Activated naive CD4-positive, alpha-beta T cell treated with anti-CD3 and anti-CD28 coated beads, Interleukin-2, amount 10 ng/mL, durations not matched to agents 7 days and 5 days (primary cell): ENCODE measurements at regions of chr16 and their contacts with region 1.

Region 1: DNA sequence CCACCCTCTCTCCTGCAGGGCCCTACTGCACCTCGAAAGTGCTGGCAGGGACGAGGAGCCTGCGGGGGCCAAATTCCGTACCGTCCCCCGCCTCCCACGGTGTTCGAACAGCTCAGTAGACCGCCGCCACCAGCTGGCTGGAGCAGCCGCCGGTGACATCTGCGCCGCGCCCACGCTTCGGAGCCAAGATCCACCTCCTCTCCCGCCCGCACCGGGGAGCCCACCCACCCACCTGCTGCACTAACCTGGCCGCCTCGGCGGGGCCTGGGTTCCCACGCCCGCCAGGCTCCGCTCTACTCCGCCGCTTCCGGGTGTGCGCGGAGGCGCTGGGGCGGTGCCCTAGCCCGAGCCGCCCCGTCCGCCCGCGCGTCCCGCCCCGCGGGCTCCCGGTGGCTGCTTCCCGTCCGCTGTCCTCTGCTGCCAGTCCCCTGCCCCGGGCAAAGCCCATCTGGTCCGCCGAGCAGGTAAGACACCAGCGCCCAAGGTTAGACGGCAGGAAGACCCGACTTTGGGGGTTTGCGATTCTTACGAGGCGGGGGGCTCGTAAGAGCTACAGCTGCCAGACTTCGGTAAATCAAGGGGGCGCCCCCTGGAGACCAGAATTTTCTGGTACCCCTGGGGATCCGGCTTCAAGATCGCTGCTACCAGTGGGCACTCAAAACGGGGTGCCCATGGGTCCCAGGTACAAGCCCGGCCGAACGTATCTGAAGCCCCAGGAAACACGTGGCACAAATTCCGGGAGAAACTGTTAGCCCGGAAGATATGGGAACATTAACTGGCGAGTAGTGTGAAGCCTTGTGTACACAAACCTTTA is at the starts of genes FBXL8 and TRADD:
- DNase-seq: peak; percentile 85
- H3K4me3 Mint-ChIP-seq: peak within 1 kb of the TSS; percentile 94
- H3K27ac Mint-ChIP-seq: peak within 1 kb of the TSS; percentile 100
- H3K4me1 Mint-ChIP-seq: peaks cover 61% of the 10 kb centered on the region
- H3K27me3 Mint-ChIP-seq: peaks cover 44% of the 10 kb centered on the region

Region 2: GRCh38 chr16:66977341-66978113 is 182.3 kb before region 1 on chr16:
- CTCF ChIA-PET with region 1: interaction called, 25 read pairs
- DNase-seq: peak; percentile 94
- H3K4me3 Mint-ChIP-seq: no peak overlapping the region
- H3K27ac Mint-ChIP-seq: peak overlapping the region; percentile 69
- H3K4me1 Mint-ChIP-seq: peaks cover 66% of the 10 kb centered on the region
- H3K27me3 Mint-ChIP-seq: peaks cover 5% of the 10 kb centered on the region

Region 3: DNA sequence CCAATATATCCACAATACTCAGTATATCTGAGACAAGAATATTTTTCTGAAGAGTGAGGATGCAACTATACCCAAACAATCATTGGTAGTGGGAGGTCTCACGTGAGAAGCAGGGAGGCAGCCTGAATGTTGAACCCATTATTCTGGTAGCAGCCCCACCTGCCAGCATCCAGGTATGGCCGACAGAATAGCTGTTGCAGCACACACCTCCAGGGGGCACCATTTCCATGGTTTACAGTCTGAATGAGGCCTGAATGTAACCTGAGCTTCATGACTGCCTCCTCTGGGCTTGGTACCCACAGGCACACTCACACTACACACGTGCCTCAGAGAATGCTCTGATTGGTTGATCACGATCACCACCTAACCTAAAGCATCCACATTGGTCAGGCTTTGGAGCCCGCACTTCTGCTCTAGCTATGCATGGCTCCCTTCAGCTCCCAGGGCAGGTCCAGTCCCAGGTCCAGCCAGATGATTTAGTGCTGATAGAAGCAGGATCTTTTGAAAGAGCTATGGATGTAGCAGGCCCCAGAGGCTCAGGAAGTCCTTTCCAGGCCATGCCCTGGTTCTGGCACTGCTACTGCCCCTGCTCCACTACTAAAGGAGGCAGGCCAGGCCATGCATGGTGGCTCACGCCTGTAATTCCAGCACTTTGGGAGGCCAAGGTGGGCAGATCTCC is 141.9 kb before region 1 on chr16:
- CTCF ChIA-PET with region 1: interaction called, 163 read pairs
- DNase-seq: peak; percentile 94
- H3K4me3 Mint-ChIP-seq: no peak overlapping the region
- H3K27ac Mint-ChIP-seq: peak overlapping the region; percentile 64
- H3K4me1 Mint-ChIP-seq: peaks cover 50% of the 10 kb centered on the region
- H3K27me3 Mint-ChIP-seq: peaks cover 20% of the 10 kb centered on the region

Region 4: GRCh38 chr16:67104061-67104460 is 55.7 kb before region 1 on chr16:
- CTCF ChIA-PET with region 1: interaction called, 10 read pairs
- DNase-seq: no peak
- H3K4me3 Mint-ChIP-seq: no peak overlapping the region
- H3K27ac Mint-ChIP-seq: no peak overlapping the region
- H3K4me1 Mint-ChIP-seq: no peaks in the 10 kb centered on the region
- H3K27me3 Mint-ChIP-seq: no peaks in the 10 kb centered on the region

Region 5: GRCh38 chr16:67183627-67184328 is 24.0 kb after region 1 on chr16 and contains the start of gene MATCAP1:
- CTCF ChIA-PET with region 1: interaction called, 14 read pairs
- DNase-seq: peak; percentile 98
- H3K4me3 Mint-ChIP-seq: no peak within 1 kb of the TSS
- H3K27ac Mint-ChIP-seq: no peak within 1 kb of the TSS
- H3K4me1 Mint-ChIP-seq: peaks cover 25% of the 10 kb centered on the region
- H3K27me3 Mint-ChIP-seq: peaks cover 39% of the 10 kb centered on the region